ENCODE measurements at regions of chr10 and their contacts with region 1.

Region 1: DNA sequence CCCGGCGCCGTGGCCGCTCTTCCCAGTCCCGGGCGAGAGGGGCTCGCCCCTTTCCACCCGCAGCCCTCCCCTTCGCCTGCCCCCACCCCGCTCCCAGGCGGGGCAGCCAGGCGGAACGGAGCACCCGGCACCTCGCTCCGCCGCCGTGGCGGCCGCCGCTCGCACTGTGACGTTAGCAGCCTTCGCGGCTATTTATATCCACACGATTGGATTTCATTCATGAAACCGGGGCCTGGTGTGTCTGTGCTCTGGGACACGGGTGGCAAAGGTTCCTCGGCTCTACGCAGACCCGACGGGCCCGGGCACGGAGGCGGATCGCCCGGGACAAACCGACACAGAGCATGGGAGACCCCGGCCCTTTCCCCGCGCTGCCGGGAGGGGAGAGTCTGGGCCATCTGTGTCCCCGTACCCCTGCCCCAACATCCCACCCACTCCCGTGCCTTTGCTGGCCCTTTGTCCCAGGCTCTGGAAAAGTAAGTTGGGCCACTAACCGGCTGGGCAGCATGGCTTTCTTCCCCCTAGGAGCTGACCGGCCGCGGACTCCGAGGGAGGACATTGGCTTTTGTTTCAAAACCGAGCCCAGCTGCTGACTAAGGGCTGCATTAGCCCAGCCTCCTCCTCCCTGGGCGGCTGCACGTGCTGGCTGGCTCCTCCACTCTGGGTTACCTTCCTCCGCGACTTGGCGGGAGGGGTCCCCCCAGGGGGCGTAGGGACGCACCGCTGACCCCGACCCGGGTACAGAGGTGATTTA is at the start of gene RHOBTB1:
- DNase-seq: peak; percentile 62 to 77
- H3K4me3 ChIP-seq: peak within 1 kb of the TSS; percentile 95
- H3K27ac ChIP-seq: peak within 1 kb of the TSS; percentile 73
- H3K4me1 ChIP-seq: peaks cover 12% of the 10 kb centered on the region
- H3K27me3 ChIP-seq: no peaks in the 10 kb centered on the region
- CTCF ChIP-seq: no peak
- total RNA-seq, gene RHOBTB1: 5.2 and 7.8 TPM in 2 replicates

Region 2: DNA sequence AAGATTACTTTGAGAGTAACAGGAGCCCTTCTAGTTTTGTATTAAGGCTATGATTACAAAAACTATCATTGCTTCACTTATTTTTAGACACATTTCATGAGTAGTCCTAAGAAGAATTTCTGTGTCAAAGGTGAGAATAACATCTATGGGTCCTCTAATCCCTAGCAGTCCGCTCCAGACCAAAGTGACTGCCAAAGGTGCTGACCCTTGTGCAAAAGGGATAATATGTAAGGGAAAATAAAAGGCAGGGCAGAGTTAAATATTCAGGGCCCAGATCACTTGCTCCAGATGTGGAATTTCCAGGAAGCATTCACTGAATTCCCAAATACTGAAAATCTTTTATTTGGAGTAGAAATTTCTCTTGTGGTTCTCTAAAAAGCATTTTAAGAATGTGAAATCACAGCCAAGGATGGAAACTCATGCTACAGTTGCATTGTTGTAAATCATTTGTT is 29.6 kb before region 1 on chr10:
- CTCF ChIA-PET with region 1: interaction called, 17 read pairs
- POLR2A ChIA-PET with region 1: interaction called, 18 read pairs
- intact Hi-C with region 1: no loop called
- DNase-seq: no peak
- H3K4me3 ChIP-seq: no peak overlapping the region
- H3K27ac ChIP-seq: no peak overlapping the region
- H3K4me1 ChIP-seq: no peaks in the 10 kb centered on the region; the same call in 1 of the 2 replicates
- H3K27me3 ChIP-seq: no peaks in the 10 kb centered on the region
- CTCF ChIP-seq: no peak

Region 3: GRCh38 chr10:60955957-60956425 is 11.7 kb after region 1 on chr10:
- CTCF ChIA-PET with region 1: no interaction called
- POLR2A ChIA-PET with region 1: no interaction called
- intact Hi-C with region 1: loop called (anchors 1 kb)
- DNase-seq: peak; percentile 20 to 90
- H3K4me3 ChIP-seq: no peak overlapping the region
- H3K27ac ChIP-seq: peak overlapping the region; percentile 45
- H3K4me1 ChIP-seq: peaks cover 37% of the 10 kb centered on the region
- H3K27me3 ChIP-seq: no peaks in the 10 kb centered on the region
- CTCF ChIP-seq: no peak

Region 4: GRCh38 chr10:61081301-61081700 is 137.0 kb after region 1 on chr10:
- CTCF ChIA-PET with region 1: no interaction called
- POLR2A ChIA-PET with region 1: no interaction called
- intact Hi-C with region 1: no loop called
- DNase-seq: no peak
- H3K4me3 ChIP-seq: no peak overlapping the region
- H3K27ac ChIP-seq: no peak overlapping the region
- H3K4me1 ChIP-seq: no peaks in the 10 kb centered on the region
- H3K27me3 ChIP-seq: no peaks in the 10 kb centered on the region
- CTCF ChIP-seq: no peak

Region 5: DNA sequence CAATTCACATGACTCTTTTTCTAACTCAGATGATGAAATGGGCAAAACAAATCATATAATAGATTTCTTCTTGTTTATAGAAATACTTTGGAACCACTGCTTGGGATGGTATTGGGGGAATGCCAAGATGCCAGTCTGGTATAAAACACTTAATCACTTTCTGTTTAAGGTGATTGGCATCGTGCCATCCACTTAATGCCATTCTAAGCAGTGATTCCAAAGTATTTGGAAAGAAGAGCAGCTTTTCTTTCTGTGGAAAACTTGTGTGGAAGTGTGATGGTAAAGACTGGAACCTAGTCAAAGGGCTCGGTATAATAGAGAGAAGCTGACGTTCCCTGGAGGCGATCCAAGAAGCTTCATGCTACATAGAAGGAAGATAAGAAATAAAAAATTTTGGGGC is 388.2 kb after region 1 on chr10:
- CTCF ChIA-PET with region 1: no interaction called
- POLR2A ChIA-PET with region 1: no interaction called
- intact Hi-C with region 1: no loop called
- DNase-seq: no peak
- H3K4me3 ChIP-seq: no peak overlapping the region
- H3K27ac ChIP-seq: no peak overlapping the region
- H3K4me1 ChIP-seq: no peaks in the 10 kb centered on the region
- H3K27me3 ChIP-seq: no peaks in the 10 kb centered on the region
- CTCF ChIP-seq: no peak